Right cardiac atrium (tissue), 5 donors: ENCODE measurements at regions of chr2 and their contacts with region 1.

Region 1: DNA sequence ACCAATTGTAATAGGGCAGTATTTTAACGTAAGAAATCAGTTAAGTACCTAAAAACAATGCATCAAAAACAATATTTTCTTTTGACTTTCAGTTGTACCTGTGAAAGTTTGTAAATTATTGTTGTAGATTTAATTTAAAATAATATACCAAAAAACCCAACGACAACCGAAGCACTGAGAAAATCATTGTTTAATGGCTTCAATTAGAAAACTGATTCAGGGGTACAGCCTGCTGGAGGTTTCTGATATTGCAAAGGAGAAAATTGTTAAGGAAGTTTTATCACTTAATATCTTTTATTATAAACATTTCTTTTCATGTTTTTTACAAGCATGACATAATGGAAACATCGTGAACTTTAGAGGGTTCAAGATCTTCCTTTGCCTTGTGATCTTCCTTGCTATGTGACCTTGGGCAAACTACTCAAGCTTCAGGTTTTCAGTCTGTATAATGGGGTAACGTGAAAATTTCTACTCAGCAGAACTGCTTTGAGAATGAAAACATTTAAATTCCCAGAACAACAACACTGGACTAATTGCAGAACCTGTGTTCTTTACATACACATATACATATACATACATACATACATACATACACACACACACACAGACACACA is 76.3 kb upstream of the GLS start:
- DNase-seq: no peak
- ATAC-seq: no peak
- H3K4me3 ChIP-seq: no peak overlapping the region
- H3K27ac ChIP-seq: no peak overlapping the region
- H3K4me1 ChIP-seq: no peaks in the 10 kb centered on the region
- H3K27me3 ChIP-seq: no peaks in the 10 kb centered on the region

Region 2: DNA sequence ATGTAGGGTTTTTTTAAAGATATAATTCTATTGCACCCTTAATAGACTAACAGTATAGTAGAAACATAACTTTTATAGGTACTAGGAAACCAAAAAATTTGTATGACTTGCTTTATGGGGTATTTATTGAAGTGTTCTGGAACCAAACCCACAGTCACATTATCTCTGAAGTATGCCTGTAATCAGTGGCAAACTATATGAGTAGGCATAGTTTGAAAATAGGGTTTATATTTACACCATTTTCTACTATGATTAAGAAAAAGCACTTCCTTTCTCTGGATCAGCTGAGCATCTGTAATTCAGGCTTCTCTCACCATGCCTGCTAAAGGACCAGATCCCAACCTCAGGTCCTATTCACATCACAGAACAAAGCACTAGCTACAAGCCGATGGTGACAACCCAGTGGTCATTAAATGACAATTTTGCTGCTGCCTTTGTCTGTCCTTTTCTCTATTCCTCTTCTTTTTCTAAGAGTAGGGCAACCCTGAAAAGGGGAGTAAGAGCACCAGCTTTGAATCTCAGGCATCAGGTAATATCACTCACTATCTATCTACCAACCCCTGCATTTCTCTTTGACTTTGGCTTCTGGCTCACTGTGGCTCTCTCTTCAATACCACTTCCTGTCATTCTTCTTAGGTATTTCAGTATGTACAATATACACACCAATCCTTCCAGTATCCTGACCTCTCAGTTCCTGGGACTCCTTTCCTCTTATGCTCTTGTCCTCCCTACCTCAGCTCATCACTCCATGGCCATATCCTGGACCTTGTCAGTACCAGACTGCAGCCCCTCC is 284.1 kb before region 1 on chr2:
- intact Hi-C with region 1: loop called in 1 of 4 experiments (anchors 5 kb)
- DNase-seq: no peak
- ATAC-seq: no peak
- H3K4me3 ChIP-seq: no peak overlapping the region
- H3K27ac ChIP-seq: no peak overlapping the region
- H3K4me1 ChIP-seq: no peaks in the 10 kb centered on the region
- H3K27me3 ChIP-seq: no peaks in the 10 kb centered on the region

Region 3: GRCh38 chr2:190791347-190791975 is 12.8 kb before region 1 on chr2:
- intact Hi-C with region 1: no loop called
- DNase-seq: peak; percentile 67 to 77 (median 74)
- ATAC-seq: peak; percentile 95 to 99
- H3K4me3 ChIP-seq: peak overlapping the region; percentile 22
- H3K27ac ChIP-seq: peak overlapping the region; percentile 29
- H3K4me1 ChIP-seq: peaks cover 3% of the 10 kb centered on the region
- H3K27me3 ChIP-seq: no peaks in the 10 kb centered on the region